Heart right ventricle (tissue), 16 donors: ENCODE measurements at regions of chr10 and their contacts with region 1.

Region 1: DNA sequence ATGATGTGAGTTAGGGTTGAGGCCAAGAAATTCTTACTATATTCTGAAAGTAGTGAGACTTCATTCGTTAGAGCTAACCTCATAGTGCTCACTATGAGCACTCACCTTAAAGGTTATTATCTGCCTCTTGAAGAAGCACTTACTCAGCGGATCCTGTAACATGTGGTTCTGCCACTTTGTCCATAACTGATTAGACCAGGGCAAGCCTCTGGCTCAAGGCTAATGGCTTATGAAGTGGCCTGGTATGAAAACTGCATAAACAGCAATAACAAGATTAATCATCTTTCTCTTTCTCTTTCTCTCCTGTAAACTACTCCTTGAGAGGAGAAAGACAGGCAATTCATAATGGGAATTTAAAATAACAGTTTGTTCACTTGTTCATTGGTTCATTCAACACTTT is 82.8 kb downstream of the MAPK8 start:
- DNase-seq: no peak
- ATAC-seq: peak in 1 of 8 donors; percentile 41
- H3K4me3 ChIP-seq: no peak overlapping the region
- H3K27ac ChIP-seq: no peak overlapping the region
- H3K4me1 ChIP-seq: peaks cover 0 to 42% (median 31%) of the 10 kb centered on the region in 9 donors
- H3K27me3 ChIP-seq: no peaks in the 10 kb centered on the region
- CTCF ChIP-seq: no peak

Region 2: GRCh38 chr10:48336978-48337599 is 52.2 kb before region 1 on chr10:
- intact Hi-C with region 1: no loop called
- DNase-seq: no peak
- ATAC-seq: no peak
- H3K4me3 ChIP-seq: no peak overlapping the region
- H3K27ac ChIP-seq: no peak overlapping the region
- H3K4me1 ChIP-seq: peaks cover 0 to 48% (median 12%) of the 10 kb centered on the region in 9 donors
- H3K27me3 ChIP-seq: no peaks in the 10 kb centered on the region
- CTCF ChIP-seq: no peak

Region 3: GRCh38 chr10:50280049-50280841 is 1891.0 kb after region 1 on chr10:
- intact Hi-C with region 1: loop called in 1 of 10 experiments (anchors 5 kb)
- DNase-seq: no peak
- ATAC-seq: no peak
- H3K4me3 ChIP-seq: no peak overlapping the region
- H3K27ac ChIP-seq: no peak overlapping the region
- H3K4me1 ChIP-seq: no peaks in the 10 kb centered on the region
- H3K27me3 ChIP-seq: peaks cover 0 to 30% (median 3%) of the 10 kb centered on the region in 7 donors
- CTCF ChIP-seq: no peak